GM12878 (cell line): ENCODE measurements at regions of chr17 and their contacts with region 1.

Region 1: DNA sequence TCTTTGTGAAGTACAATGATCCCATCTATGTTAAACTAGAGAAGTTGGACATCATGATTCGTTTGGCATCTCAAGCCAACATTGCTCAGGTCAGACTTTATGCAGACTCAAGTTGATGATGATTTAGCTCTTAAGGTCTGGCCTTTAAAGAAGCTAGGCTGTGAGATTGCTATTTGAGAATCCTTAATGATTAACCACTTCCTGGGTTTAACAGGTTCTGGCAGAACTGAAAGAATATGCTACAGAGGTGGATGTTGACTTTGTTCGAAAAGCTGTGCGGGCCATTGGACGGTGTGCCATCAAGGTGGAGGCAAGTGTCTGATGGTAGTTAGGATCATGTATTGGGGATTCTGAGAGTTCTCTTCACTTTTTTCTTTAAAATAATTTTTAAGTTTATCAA is 40.3 kb downstream of the AP2B1 start:
- DNase-seq: no peak
- ATAC-seq: no peak
- H3K4me3 ChIP-seq: no peak overlapping the region
- H3K27ac ChIP-seq: no peak overlapping the region
- H3K4me1 ChIP-seq: no peaks in the 10 kb centered on the region
- H3K27me3 ChIP-seq: no peaks in the 10 kb centered on the region
- CTCF ChIP-seq: no peak
- EP300 ChIP-seq: no peak
- POLR2A ChIP-seq: no peak
- RAD21 ChIP-seq: no peak

Region 2: DNA sequence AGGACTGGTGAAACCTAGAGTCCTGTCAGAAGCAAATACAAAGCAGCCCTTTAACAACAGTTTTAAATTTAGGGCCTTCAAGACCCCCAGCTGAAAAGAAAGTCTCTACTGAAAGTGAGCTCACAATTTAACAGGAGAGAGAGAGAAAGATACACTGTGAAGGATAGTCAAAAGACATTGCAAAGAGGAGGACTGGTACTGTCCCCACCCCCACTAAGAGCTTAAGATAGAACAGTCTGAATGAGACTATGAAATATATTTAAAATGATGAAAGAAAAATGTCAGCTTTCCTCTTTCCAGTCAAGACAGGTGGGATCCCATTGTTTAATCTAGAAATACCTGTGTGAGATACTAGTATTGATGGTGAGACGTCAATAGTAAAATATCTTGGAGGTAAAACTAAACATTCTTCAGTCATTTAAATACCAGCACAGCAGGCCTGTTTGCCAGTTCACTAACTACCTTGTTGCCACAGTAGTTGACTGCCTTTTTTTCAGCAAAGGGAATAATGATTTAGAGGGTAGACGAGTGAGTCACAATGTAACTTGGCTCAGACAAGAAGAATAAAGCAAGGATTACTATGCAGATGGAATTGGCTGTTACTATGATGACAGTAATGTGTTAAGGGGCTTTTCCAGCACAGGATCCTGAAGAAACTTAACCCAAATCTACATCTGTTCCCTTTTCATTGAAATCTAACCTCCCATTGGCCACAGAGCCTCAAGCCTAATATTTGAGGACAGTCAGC is 56.8 kb after region 1 on chr17:
- CTCF ChIA-PET with region 1: no interaction called
- POLR2A ChIA-PET with region 1: no interaction called
- RAD21 ChIA-PET with region 1: no interaction called
- SMC1A ChIA-PET with region 1: no interaction called
- in situ Hi-C with region 1: loop called (anchors 10 kb)
- intact Hi-C with region 1: no loop called
- DNase-seq: no peak
- ATAC-seq: no peak
- H3K4me3 ChIP-seq: no peak overlapping the region
- H3K27ac ChIP-seq: no peak overlapping the region
- H3K4me1 ChIP-seq: no peaks in the 10 kb centered on the region
- H3K27me3 ChIP-seq: no peaks in the 10 kb centered on the region
- CTCF ChIP-seq: no peak
- EP300 ChIP-seq: no peak
- POLR2A ChIP-seq: no peak
- RAD21 ChIP-seq: no peak

Region 3: DNA sequence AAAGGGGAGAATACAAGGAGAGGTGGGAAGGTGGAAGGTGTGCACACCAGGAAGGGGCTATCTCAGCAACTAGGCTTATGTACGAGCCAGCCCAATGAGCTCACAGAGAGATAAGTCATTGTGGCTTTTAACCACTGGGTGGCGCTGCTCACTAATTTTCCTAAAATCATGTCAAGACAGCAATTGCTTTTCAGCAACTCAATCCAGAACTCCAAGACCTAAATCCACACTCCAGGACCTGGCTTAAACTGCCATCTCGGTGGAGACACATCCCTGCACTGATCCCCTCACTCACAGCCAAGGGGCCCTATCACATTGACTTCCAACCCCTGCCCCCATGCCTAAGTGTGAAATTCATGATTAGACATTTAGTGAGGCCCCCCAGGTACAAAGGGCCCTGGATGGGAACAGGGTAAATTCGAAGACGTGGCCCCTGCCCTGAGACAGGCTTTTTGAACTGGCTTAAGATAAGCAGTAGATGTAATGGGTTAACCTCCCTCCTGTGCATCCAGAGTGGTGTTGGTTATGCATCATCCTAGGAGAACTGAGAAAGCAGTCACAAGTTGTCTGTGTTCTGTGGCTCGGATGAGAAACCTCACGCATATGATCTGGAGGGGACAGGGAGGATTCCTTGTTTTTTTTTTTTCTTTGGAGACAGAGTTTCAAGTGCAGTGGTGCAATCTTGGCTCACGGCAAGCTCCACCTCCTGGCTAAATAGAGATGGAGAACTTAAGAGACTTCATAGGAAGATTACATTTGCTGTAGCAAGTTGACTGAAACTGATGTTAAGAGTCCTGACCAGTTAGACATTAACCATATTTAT is 342.4 kb after region 1 on chr17:
- CTCF ChIA-PET with region 1: no interaction called
- POLR2A ChIA-PET with region 1: no interaction called
- RAD21 ChIA-PET with region 1: no interaction called
- SMC1A ChIA-PET with region 1: no interaction called
- in situ Hi-C with region 1: no loop called
- intact Hi-C with region 1: no loop called
- DNase-seq: peak; percentile 45
- ATAC-seq: peak; percentile 92
- H3K4me3 ChIP-seq: no peak overlapping the region
- H3K27ac ChIP-seq: no peak overlapping the region
- H3K4me1 ChIP-seq: no peaks in the 10 kb centered on the region
- H3K27me3 ChIP-seq: no peaks in the 10 kb centered on the region
- CTCF ChIP-seq: peak; percentile 77 to 92 (median 86); a peak in 5 of 6 replicates
- EP300 ChIP-seq: no peak
- POLR2A ChIP-seq: no peak
- RAD21 ChIP-seq: peak; percentile 95